Mammary epithelial cell (primary cell): ENCODE measurements at regions of chr15 and their contacts with region 1.

Region 1: DNA sequence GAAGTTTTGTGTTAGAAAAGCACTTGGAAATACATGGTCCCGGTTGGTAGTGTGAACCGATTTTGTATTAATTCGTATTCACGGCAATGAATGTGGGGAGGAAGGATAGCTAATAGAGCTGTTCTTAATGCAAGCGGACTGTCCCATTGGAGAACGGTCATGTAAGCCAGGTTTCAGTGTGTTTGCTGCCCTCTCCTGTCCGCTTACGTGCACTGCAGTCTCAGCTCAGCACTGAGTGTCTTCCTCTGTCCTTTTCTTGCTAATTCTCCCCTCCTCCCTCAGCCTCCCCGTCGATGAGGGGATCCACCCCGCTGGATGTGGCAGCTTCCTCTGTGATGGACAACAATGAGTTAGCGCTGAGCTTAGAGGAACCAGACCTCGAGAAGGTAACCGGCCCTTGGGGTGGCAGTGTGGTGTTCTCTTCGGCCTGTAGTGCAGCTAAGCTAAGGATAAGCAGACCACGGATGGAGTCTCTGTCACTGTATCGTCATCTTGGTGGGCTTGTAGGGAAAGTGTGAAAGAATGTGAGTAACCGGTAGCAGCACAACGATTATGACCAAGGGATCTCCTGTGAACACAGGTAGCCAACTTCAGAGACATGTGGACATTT is 267.5 kb upstream of the CHRM5 start:
- DNase-seq: peak; percentile 62
- H3K4me3 ChIP-seq: no peak overlapping the region
- H3K27ac ChIP-seq: no peak overlapping the region
- H3K4me1 ChIP-seq: no peaks in the 10 kb centered on the region
- H3K27me3 ChIP-seq: no peaks in the 10 kb centered on the region
- CTCF ChIP-seq: peak; percentile 95 to 99

Region 2: GRCh38 chr15:33064878-33065277 is 635.9 kb before region 1 on chr15:
- CTCF ChIA-PET with region 1: no interaction called
- dilution Hi-C with region 1: no loop called
- in situ Hi-C with region 1: no loop called
- intact Hi-C with region 1: no loop called
- DNase-seq: peak; percentile 57
- H3K4me3 ChIP-seq: no peak overlapping the region
- H3K27ac ChIP-seq: no peak overlapping the region
- H3K4me1 ChIP-seq: peaks cover 33% of the 10 kb centered on the region
- H3K27me3 ChIP-seq: no peaks in the 10 kb centered on the region
- CTCF ChIP-seq: no peak

Region 3: DNA sequence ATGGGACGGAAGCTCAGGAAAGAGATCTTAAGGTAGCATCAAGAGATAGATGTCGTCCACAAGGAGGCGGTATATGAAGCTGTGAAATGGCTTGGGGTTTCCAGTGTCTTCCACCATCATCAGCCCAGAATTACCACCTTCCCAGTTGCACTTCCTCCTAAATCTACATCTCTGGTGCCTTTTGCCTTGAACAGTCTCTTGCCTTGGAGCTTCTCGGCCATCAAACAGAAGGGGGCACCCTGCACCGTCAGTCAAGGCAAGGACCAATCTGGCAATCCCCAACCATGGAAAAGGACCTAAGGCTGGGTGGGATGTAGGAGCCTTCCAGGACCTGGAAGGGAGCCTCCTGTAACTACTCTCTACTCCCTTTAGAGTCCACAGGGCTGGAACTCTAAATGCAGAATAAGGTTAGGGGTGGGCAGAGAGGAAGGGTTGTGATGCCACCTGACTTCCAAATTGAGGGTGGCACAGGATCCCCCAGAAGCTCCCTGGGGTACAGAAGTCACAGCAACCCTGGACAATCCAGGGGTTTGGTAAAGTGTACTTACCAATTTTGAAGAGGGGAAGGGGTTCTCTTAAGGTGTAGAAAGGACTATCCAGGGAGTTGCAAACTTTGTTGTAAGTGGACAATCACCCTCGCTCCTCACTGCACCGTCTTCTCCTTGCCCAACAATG is 391.1 kb before region 1 on chr15:
- CTCF ChIA-PET with region 1: interaction called, 3 read pairs
- dilution Hi-C with region 1: no loop called
- in situ Hi-C with region 1: loop called in 1 of 2 experiments (anchors 10 kb)
- intact Hi-C with region 1: loop called (anchors 1 kb)
- DNase-seq: peak; percentile 17
- H3K4me3 ChIP-seq: no peak overlapping the region
- H3K27ac ChIP-seq: no peak overlapping the region
- H3K4me1 ChIP-seq: no peaks in the 10 kb centered on the region
- H3K27me3 ChIP-seq: peaks cover 16% of the 10 kb centered on the region
- CTCF ChIP-seq: no peak